Naive thymus-derived CD4-positive, alpha-beta T cell (primary cell): ENCODE measurements at regions of chrX and their contacts with region 1.

Region 1: DNA sequence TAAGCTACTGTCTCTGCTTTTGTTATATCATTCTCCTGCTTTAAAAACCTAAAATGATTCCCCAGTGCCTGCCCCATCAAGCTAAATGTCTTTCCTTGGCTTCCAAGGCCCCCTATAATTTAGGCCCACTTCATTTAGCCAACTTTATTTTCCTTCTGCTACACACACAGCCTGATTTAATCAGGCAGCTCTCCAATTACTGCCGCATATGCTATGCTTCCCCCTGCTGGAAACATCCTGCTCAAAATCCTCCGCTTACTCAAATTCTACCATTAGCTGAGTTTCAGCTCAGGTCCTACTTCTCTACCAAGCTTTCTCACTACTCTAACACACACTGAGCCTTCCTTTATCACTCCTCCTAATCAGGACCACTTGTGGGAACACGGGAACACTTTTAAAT is 17.0 kb downstream of the LAMP2 start:
- DNase-seq: peak in 6 of 9 donors; percentile 8 to 34 (median 28)
- ATAC-seq: peak; percentile 58
- H3K4me3 ChIP-seq: no peak overlapping the region
- H3K4me3 Mint-ChIP-seq: no peak overlapping the region
- H3K27ac ChIP-seq: no peak overlapping the region
- H3K27ac Mint-ChIP-seq: peak overlapping the region in 3 of 9 donors; percentile 5 to 73 (median 54)
- H3K4me1 ChIP-seq: peaks cover 5 to 7% of the 10 kb centered on the region in 2 donors
- H3K4me1 Mint-ChIP-seq: peaks cover 12 to 32% (median 30%) of the 10 kb centered on the region in 7 donors
- H3K27me3 ChIP-seq: no peaks in the 10 kb centered on the region
- H3K27me3 Mint-ChIP-seq: no peaks in the 10 kb centered on the region

Region 2: DNA sequence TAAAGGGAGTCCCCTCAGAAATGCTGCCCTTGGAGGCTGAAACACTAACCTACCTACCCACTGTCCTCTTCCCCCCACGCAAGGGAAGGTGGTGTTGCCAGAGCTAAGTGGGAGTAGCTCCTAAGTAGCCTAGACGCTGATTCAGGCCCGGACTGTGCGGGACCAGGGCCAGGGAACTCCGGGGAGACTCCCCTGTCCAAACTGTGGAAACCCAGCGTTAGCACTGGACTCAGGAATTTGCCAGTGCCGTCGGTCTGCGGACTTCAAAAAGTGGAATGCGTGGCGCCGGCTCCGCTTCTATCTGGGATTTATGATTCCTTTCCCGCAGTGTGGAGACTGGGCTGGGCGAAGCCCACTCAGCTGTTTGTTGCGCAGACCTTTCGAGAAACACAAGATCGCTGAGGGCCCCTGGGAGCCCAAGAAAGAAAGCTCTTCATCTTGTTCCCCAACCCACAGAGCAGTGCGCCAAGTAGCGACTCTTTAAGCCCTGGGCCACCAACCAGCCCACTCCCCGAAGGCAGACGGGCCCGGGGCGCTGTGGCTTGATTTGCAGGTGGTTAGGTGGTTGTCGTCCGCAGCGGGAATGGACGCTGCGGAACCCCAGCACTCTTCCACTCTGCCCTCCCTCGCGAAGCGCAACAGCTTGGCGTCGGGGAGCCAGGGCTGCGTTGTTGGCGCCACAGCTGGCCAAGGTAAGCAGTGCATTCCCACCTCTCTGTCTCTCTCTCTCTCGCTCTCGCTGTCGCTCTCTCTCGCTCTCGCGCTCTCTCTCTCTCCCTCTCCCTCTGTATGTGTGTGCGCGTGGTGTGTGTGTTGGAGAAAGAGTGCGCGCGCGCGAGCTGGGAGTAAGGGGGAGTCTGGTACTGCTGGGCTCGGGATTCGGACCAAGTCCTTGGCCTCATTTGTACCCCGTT is 142.9 kb before region 1 on chrX:
- CTCF ChIA-PET with region 1: interaction called, 4 read pairs
- POLR2A ChIA-PET with region 1: interaction called, 6 read pairs
- intact Hi-C with region 1: loop called in 1 of 2 experiments (anchors 2 kb)
- DNase-seq: peak; percentile 39 to 78 (median 63)
- ATAC-seq: peak; percentile 97
- H3K4me3 ChIP-seq: peak overlapping the region; percentile 74
- H3K4me3 Mint-ChIP-seq: peak overlapping the region; percentile 81 to 91 (median 87)
- H3K27ac ChIP-seq: no peak overlapping the region
- H3K27ac Mint-ChIP-seq: peak overlapping the region; percentile 18 to 96 (median 88)
- H3K4me1 ChIP-seq: peaks cover 0 to 2% of the 10 kb centered on the region in 2 donors
- H3K4me1 Mint-ChIP-seq: peaks cover 8 to 31% (median 15%) of the 10 kb centered on the region in 7 donors
- H3K27me3 ChIP-seq: peaks cover 0 to 3% of the 10 kb centered on the region in 2 donors
- H3K27me3 Mint-ChIP-seq: peaks cover 16 to 78% (median 26%) of the 10 kb centered on the region in 5 donors

Region 3: DNA sequence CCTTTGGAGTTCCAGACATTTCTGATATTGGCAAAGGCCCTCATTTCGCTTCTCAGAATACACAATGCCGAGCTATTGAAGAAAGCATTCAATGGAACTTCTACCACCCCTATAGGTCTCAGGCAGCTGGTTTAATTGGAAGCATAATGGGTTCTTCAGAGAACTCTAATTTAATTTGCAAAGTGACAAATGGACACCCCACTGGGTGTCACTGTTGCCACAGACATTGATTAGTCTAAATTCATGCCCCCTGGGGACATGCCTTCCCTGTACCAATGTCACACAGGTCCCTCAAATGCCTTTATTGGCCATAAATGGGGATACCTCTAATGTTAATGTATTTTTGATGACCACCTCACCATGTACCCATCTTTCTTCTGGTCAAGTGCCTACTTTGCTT is 118.0 kb before region 1 on chrX:
- CTCF ChIA-PET with region 1: interaction called, 3 read pairs
- POLR2A ChIA-PET with region 1: no interaction called
- intact Hi-C with region 1: loop called in 1 of 2 experiments (anchors 1 kb)
- DNase-seq: peak in 1 of 9 donors; percentile 5
- ATAC-seq: no peak
- H3K4me3 ChIP-seq: no peak overlapping the region
- H3K4me3 Mint-ChIP-seq: no peak overlapping the region
- H3K27ac ChIP-seq: no peak overlapping the region
- H3K27ac Mint-ChIP-seq: no peak overlapping the region
- H3K4me1 ChIP-seq: no peaks in the 10 kb centered on the region
- H3K4me1 Mint-ChIP-seq: peaks cover 0 to 1% (median 0%) of the 10 kb centered on the region in 7 donors
- H3K27me3 ChIP-seq: no peaks in the 10 kb centered on the region
- H3K27me3 Mint-ChIP-seq: peaks cover 0 to 7% (median 0%) of the 10 kb centered on the region in 5 donors

Region 4: DNA sequence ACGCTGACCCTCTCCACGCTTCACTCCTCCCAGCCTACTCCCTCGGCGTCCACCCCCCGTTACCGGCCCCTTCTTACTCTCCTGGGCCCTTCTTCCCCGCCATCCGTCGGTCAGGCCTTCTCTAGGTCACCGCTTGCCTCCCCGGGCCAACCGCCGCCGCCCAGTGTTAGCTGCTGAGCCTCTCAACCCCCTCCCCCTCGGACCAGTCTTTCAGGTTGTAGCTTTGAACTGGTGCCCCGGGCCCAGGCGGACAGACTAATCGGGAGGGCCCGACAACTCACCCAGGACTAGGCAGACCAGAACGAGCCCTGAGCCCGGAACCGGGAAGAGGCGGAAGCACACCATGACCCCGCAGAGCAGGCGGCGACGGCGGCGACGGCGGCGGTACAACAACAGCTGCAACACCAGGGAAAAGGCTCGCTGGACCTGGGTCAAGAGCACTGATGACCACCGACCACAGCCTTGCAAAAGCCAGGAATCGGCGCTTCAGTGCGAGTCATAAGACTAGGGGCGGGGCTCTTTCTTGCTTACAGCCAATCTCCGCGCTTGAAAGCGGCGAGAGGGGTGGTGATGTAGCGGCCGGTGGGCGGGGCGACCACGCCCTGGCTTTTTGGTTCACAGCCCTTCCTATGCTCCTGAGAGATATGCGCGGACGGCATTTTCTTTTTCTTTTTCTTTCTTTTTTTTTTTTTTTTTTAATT is 16.8 kb after region 1 on chrX and contains the start of gene LAMP2:
- CTCF ChIA-PET with region 1: no interaction called
- POLR2A ChIA-PET with region 1: interaction called, 13 read pairs
- intact Hi-C with region 1: loop called (anchors 1 to 2 kb)
- DNase-seq: peak; percentile 58 to 78 (median 72)
- ATAC-seq: peak; percentile 99
- H3K4me3 ChIP-seq: peak within 1 kb of the TSS; percentile 79
- H3K4me3 Mint-ChIP-seq: peak within 1 kb of the TSS; percentile 89 to 99 (median 94)
- H3K27ac ChIP-seq: peak within 1 kb of the TSS; percentile 80
- H3K27ac Mint-ChIP-seq: peak within 1 kb of the TSS; percentile 76 to 94 (median 92)
- H3K4me1 ChIP-seq: peaks cover 0 to 7% of the 10 kb centered on the region in 2 donors
- H3K4me1 Mint-ChIP-seq: peaks cover 5 to 40% (median 29%) of the 10 kb centered on the region in 7 donors
- H3K27me3 ChIP-seq: no peaks in the 10 kb centered on the region
- H3K27me3 Mint-ChIP-seq: no peaks in the 10 kb centered on the region
- total RNA-seq, gene LAMP2: 22.5 to 60.3 (median 44.9) TPM

Region 5: DNA sequence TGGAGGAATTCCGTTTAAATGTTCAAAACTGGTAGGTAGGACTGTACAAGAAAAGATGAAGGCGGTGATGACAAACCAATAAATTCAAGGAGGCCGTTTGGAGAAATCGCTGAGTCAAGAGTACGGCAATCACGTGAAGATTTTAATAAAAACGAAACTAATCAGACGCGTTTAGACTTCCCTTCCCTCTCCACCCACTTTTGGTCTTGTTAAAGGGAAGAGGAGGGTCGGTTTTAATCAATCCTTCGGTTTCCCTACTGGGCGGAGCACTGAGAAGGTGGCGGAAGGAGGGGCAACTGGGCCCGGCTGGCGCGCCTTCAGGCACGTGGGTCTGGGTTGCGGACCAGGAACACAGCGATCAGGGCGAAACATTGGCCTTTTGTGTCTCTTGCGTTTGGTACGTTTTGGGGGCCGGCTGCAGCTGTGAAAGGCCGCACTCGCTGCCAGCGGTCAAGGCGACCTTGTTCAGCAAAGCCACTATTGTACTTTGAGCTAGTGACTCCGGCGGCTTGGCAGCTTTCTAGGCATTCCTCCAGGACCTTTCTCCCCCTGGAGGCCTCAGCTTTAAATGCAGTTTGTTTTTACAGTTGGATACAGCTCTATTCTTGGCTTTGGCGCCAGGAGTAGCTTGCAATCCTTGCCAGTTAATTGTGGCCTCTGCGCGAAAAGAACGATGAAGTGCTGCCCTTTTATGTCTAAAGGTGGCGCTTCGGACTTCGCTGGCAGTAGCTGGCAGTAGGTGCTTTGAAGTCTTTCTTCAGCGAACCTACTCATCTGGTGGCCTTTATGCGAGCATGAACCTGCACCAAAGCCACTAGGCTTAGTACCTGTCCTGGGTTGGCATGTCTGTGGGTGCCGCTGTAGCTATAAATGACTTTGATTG is 33.7 kb after region 1 on chrX:
- CTCF ChIA-PET with region 1: interaction called, 6 read pairs
- POLR2A ChIA-PET with region 1: no interaction called
- intact Hi-C with region 1: loop called in 1 of 2 experiments (anchors 5 kb)
- DNase-seq: peak; percentile 21 to 52 (median 43)
- ATAC-seq: peak; percentile 83
- H3K4me3 ChIP-seq: peak overlapping the region; percentile 89
- H3K4me3 Mint-ChIP-seq: peak overlapping the region; percentile 81 to 94 (median 89)
- H3K27ac ChIP-seq: peak overlapping the region; percentile 69
- H3K27ac Mint-ChIP-seq: peak overlapping the region; percentile 81 to 96 (median 91)
- H3K4me1 ChIP-seq: peaks cover 9 to 18% of the 10 kb centered on the region in 2 donors
- H3K4me1 Mint-ChIP-seq: peaks cover 5 to 28% (median 19%) of the 10 kb centered on the region in 7 donors
- H3K27me3 ChIP-seq: no peaks in the 10 kb centered on the region
- H3K27me3 Mint-ChIP-seq: no peaks in the 10 kb centered on the region

Region 6: DNA sequence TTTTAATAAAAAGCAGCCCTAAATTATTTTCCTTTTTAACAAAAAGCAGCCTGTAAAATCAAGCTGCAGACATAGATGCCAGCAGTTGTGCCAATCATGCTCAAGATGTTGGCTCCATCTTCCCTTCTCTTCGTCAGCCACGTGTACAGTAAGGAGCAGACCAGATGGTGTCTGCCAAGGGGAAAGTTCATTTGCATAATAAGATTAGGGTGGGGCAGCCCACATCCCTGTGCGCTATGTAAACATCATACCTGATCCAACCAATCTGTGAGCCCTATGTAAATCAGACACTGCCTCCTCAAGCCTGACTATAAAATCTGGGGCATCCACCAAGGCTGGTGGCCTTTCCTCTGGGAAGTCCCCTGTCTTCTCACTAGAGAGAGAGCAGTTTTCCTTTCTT is 200.9 kb after region 1 on chrX:
- CTCF ChIA-PET with region 1: no interaction called
- POLR2A ChIA-PET with region 1: no interaction called
- intact Hi-C with region 1: no loop called
- DNase-seq: no peak
- ATAC-seq: no peak
- H3K4me3 ChIP-seq: no peak overlapping the region
- H3K4me3 Mint-ChIP-seq: no peak overlapping the region
- H3K27ac ChIP-seq: no peak overlapping the region
- H3K27ac Mint-ChIP-seq: no peak overlapping the region
- H3K4me1 ChIP-seq: no peaks in the 10 kb centered on the region
- H3K4me1 Mint-ChIP-seq: peaks cover 0 to 4% (median 0%) of the 10 kb centered on the region in 7 donors
- H3K27me3 ChIP-seq: no peaks in the 10 kb centered on the region
- H3K27me3 Mint-ChIP-seq: no peaks in the 10 kb centered on the region

Region 7: DNA sequence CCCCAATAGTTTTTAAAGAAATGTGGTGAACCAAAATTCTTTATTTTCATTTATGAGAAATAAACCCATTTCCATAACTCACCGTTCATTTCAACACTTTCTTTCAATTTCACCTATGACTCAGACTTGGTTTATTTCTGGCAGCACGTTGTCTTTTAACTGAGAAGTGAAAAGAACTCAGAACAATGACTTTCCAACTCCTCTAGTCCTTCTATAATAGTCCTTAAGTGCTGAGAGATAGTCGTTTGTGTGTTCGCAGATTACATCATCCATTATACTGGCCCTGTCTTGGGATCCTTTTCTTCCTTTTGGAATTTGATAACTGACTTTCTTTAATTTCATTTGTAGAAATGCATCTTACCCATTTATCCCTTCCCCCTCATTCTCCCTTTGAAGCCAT is 708.9 kb after region 1 on chrX:
- CTCF ChIA-PET with region 1: no interaction called
- POLR2A ChIA-PET with region 1: no interaction called
- intact Hi-C with region 1: no loop called
- DNase-seq: no peak
- ATAC-seq: no peak
- H3K4me3 ChIP-seq: no peak overlapping the region
- H3K4me3 Mint-ChIP-seq: peak overlapping the region in 5 of 10 donors; percentile 5 to 70 (median 34)
- H3K27ac ChIP-seq: no peak overlapping the region
- H3K27ac Mint-ChIP-seq: peak overlapping the region in 3 of 9 donors; percentile 1 to 50 (median 9)
- H3K4me1 ChIP-seq: no peaks in the 10 kb centered on the region
- H3K4me1 Mint-ChIP-seq: peaks cover 1 to 21% (median 14%) of the 10 kb centered on the region in 7 donors
- H3K27me3 ChIP-seq: no peaks in the 10 kb centered on the region
- H3K27me3 Mint-ChIP-seq: peaks cover 0 to 2% (median 0%) of the 10 kb centered on the region in 5 donors